Heart right ventricle (tissue), 16 donors: ENCODE measurements at regions of chr14 and their contacts with region 1.

Region 1: GRCh38 chr14:76956316-76957090 is 72.0 kb downstream of the IRF2BPL start:
- DNase-seq: peak; percentile 90 to 92
- ATAC-seq: peak; percentile 76 to 87 (median 82)
- H3K4me3 ChIP-seq: peak overlapping the region in 9 of 10 donors; percentile 19 to 57 (median 49)
- H3K27ac ChIP-seq: peak overlapping the region; percentile 84 to 99 (median 97)
- H3K4me1 ChIP-seq: peaks cover 21 to 79% (median 53%) of the 10 kb centered on the region in 9 donors
- H3K27me3 ChIP-seq: no peaks in the 10 kb centered on the region
- CTCF ChIP-seq: peak in 5 of 9 donors; percentile 17 to 29 (median 26)

Region 2: GRCh38 chr14:76918751-76919543 is 37.6 kb before region 1 on chr14:
- intact Hi-C with region 1: loop called in 7 of 10 experiments (anchors 2 to 5 kb)
- DNase-seq: peak; percentile 93 to 94
- ATAC-seq: peak; percentile 86 to 93 (median 91)
- H3K4me3 ChIP-seq: peak overlapping the region in 4 of 10 donors; percentile 1 to 16 (median 6)
- H3K27ac ChIP-seq: peak overlapping the region; percentile 83 to 98 (median 92)
- H3K4me1 ChIP-seq: peaks cover 35 to 75% (median 56%) of the 10 kb centered on the region in 9 donors
- H3K27me3 ChIP-seq: no peaks in the 10 kb centered on the region
- CTCF ChIP-seq: no peak

Region 3: GRCh38 chr14:77040059-77040740 is 83.7 kb after region 1 on chr14:
- intact Hi-C with region 1: loop called in 4 of 10 experiments (anchors 5 kb)
- DNase-seq: peak; percentile 100
- ATAC-seq: peak; percentile 79 to 92 (median 88)
- H3K4me3 ChIP-seq: peak overlapping the region in 9 of 10 donors; percentile 19 to 46 (median 40)
- H3K27ac ChIP-seq: peak overlapping the region; percentile 90 to 100 (median 96)
- H3K4me1 ChIP-seq: peaks cover 50 to 94% (median 87%) of the 10 kb centered on the region in 9 donors
- H3K27me3 ChIP-seq: no peaks in the 10 kb centered on the region
- CTCF ChIP-seq: no peak